ENCODE measurements at regions of chr13 and their contacts with region 1.

Region 1: GRCh38 chr13:44435142-44435982 is 61.7 kb downstream of the SERP2 start:
- DNase-seq: peak; percentile 87
- H3K4me3 Mint-ChIP-seq: peak overlapping the region; percentile 68
- H3K27ac Mint-ChIP-seq: no peak overlapping the region
- H3K4me1 Mint-ChIP-seq: peaks cover 20% of the 10 kb centered on the region
- H3K27me3 Mint-ChIP-seq: peaks cover 48% of the 10 kb centered on the region

Region 2: GRCh38 chr13:43905435-43906031 is 529.8 kb before region 1 on chr13:
- CTCF ChIA-PET with region 1: interaction called, 58 read pairs
- POLR2A ChIA-PET with region 1: no interaction called
- DNase-seq: peak; percentile 19
- H3K4me3 Mint-ChIP-seq: no peak overlapping the region
- H3K27ac Mint-ChIP-seq: no peak overlapping the region
- H3K4me1 Mint-ChIP-seq: no peaks in the 10 kb centered on the region
- H3K27me3 Mint-ChIP-seq: peaks cover 18% of the 10 kb centered on the region

Region 3: GRCh38 chr13:44052780-44053184 is 382.6 kb before region 1 on chr13:
- CTCF ChIA-PET with region 1: interaction called, 11 read pairs
- POLR2A ChIA-PET with region 1: interaction called, 3 read pairs
- DNase-seq: no peak
- H3K4me3 Mint-ChIP-seq: no peak overlapping the region
- H3K27ac Mint-ChIP-seq: no peak overlapping the region
- H3K4me1 Mint-ChIP-seq: peaks cover 2% of the 10 kb centered on the region
- H3K27me3 Mint-ChIP-seq: peaks cover 44% of the 10 kb centered on the region

Region 4: DNA sequence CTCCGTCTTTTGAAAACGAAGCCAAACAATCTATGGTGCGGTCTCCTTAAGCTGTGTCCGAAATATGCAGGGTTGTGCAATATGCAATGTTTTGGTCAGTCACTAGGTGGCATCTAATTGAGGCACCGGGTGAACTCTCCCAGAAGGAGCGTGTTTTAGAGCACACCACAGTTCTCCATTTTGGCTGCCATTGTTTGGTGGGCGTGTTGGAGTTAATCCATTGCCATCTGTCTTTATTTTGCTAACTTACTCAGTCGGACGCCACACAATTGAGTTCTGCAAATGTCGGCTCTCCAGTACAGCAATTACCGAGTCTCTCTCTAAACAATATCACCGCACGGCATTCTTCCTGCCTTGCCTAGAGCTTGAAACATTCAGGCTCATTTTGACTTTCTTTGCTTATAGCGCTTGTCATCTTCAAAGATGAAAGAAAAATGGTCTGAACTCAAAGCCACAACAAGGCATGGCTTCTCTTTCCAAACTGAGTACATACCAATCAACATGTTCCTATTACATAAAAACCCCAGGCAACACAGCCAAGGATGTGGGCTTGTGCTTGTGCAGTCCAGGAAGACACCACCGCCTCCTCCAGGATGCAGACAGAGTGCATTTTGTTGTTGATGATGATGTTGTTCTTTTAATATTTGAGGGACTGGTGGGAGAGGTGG is 243.7 kb before region 1 on chr13:
- CTCF ChIA-PET with region 1: interaction called, 10 read pairs
- POLR2A ChIA-PET with region 1: interaction called, 5 read pairs
- DNase-seq: peak; percentile 30
- H3K4me3 Mint-ChIP-seq: no peak overlapping the region
- H3K27ac Mint-ChIP-seq: no peak overlapping the region
- H3K4me1 Mint-ChIP-seq: peaks cover 28% of the 10 kb centered on the region
- H3K27me3 Mint-ChIP-seq: peaks cover 60% of the 10 kb centered on the region

Region 5: GRCh38 chr13:44410346-44410859 is 25.0 kb before region 1 on chr13:
- CTCF ChIA-PET with region 1: no interaction called
- POLR2A ChIA-PET with region 1: no interaction called
- DNase-seq: no peak
- H3K4me3 Mint-ChIP-seq: no peak overlapping the region
- H3K27ac Mint-ChIP-seq: no peak overlapping the region
- H3K4me1 Mint-ChIP-seq: no peaks in the 10 kb centered on the region
- H3K27me3 Mint-ChIP-seq: peaks cover 6% of the 10 kb centered on the region

Region 6: GRCh38 chr13:44458313-44458975 is 23.1 kb after region 1 on chr13:
- CTCF ChIA-PET with region 1: no interaction called
- POLR2A ChIA-PET with region 1: no interaction called
- DNase-seq: no peak
- H3K4me3 Mint-ChIP-seq: no peak overlapping the region
- H3K27ac Mint-ChIP-seq: no peak overlapping the region
- H3K4me1 Mint-ChIP-seq: no peaks in the 10 kb centered on the region
- H3K27me3 Mint-ChIP-seq: no peaks in the 10 kb centered on the region

Region 7: DNA sequence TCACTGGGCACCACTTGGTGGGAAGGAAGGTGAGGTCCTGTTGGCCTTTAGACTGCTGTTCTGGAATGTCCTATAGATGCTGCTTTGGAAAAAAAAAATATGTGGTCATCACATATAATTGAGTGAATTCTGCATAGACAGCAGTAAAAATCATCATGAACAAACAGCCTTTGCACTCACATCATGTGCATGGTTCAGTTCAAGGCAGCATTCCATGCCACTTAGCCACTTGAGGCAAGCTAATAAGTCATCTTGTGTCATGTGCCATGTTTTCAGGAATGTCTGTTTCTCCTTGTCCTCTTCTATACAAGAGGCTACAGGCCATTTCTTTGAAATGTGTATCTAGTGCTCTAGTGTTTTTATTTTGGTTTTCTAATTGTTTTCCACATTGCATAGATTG is 184.7 kb after region 1 on chr13:
- CTCF ChIA-PET with region 1: no interaction called
- POLR2A ChIA-PET with region 1: no interaction called
- DNase-seq: no peak
- H3K4me3 Mint-ChIP-seq: no peak overlapping the region
- H3K27ac Mint-ChIP-seq: no peak overlapping the region
- H3K4me1 Mint-ChIP-seq: no peaks in the 10 kb centered on the region
- H3K27me3 Mint-ChIP-seq: peaks cover 4% of the 10 kb centered on the region